ENCODE measurements at regions of chr3 and their contacts with region 1.

Region 1: DNA sequence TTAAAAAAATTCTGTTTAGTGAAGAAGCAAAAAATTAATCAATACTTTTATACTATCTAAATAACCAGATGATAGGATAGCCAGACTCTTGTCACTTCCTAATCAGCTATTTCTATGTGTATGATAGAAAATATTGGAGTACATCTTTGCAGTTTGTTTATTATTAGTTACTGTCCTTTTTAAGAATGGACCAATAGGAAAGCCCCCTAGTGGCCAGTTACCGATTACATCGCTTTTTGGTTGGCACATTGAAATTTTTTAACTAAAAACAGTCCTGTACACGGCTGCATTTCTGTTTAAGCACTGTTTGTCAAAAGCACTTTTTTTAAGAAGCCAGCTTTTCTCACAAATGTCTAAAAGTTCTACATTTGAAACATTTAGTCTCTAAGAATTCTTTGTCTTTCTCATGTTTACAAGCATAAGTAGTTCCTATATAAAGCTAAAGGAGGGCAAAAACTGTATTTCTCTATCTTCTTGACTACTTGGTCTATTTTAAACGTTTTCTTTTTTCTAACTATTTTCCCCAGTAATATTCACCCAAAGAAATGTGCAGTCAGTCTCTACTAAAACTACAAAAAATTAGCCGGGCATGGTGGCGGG is 253.2 kb upstream of the LRTM1 start:
- DNase-seq: peak in 2 of 10 donors; percentile 13 to 17
- H3K4me3 ChIP-seq: no peak overlapping the region
- H3K27ac ChIP-seq: no peak overlapping the region
- H3K27me3 ChIP-seq: peaks cover 0 to 10% (median 0%) of the 10 kb centered on the region in 45 donors
- CTCF ChIP-seq: peak; percentile 57 to 92 (median 79)

Region 2: GRCh38 chr3:54853573-54854404 is 327.2 kb before region 1 on chr3:
- intact Hi-C with region 1: loop called in 1 of 2 experiments (anchors 5 kb)
- DNase-seq: peak; percentile 77 to 90 (median 86)
- H3K4me3 ChIP-seq: peak overlapping the region in 5 of 59 donors; percentile 5 to 29 (median 20)
- H3K27ac ChIP-seq: peak overlapping the region in 22 of 59 donors; percentile 5 to 68 (median 43)
- H3K27me3 ChIP-seq: no peaks in the 10 kb centered on the region
- CTCF ChIP-seq: peak; percentile 60 to 98 (median 93)

Region 3: DNA sequence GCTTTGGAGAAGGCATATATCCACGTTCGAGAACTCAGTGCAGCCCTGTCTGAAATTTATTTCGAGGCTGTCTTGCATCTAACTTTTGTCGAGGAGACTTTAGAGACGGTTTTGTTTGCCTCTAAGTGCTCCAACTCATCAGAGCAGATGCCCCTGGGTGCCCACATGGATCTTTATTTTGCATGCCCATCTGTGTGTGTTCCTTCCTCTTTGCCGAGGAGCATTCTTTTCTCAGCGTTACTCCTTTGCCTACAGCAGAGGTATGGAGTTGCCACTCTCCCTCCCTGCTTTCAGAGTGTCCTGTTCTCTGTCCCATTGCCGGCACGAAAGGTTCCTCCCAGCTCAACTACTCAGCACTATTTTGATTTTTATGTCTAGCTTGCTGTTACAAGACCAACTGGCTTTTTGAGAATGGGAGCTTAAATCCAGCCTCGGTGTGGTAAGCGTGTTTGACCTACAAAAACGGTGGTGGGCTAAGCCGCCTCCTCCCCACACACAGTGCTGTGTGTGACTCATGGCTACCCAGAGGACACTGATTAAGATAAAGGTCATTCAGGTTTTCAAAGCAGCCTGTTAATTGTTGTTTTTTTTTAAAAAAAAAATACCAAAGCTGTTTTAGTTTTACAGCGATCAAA is 317.8 kb before region 1 on chr3:
- intact Hi-C with region 1: loop called in 1 of 2 experiments (anchors 5 kb)
- DNase-seq: peak in 1 of 10 donors; percentile 13
- H3K4me3 ChIP-seq: no peak overlapping the region
- H3K27ac ChIP-seq: no peak overlapping the region
- H3K27me3 ChIP-seq: no peaks in the 10 kb centered on the region
- CTCF ChIP-seq: no peak

Region 4: DNA sequence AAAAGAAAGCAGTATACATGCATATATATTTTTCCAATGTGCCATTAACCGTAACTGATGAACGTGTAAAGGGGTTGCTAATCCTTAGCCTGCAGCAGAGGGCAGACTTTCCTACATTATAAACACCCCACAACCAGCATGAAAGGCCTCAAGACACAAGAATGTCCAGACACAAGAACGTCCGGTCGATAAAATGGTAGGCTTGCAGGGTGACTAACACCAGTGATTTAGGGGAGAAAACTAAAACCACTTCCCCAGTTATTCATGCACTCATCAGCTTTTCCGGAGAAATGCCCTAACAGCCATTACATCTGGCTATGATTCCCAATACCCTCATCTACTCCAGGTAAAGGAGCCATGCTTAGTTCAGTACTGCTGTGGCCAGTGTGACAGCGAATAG is 310.6 kb before region 1 on chr3:
- intact Hi-C with region 1: loop called (anchors 2 to 5 kb)
- DNase-seq: peak in 2 of 10 donors; percentile 44 to 54
- H3K4me3 ChIP-seq: no peak overlapping the region
- H3K27ac ChIP-seq: no peak overlapping the region
- H3K27me3 ChIP-seq: no peaks in the 10 kb centered on the region
- CTCF ChIP-seq: peak in 55 of 56 donors; percentile 24 to 83 (median 62)

Region 5: GRCh38 chr3:54939557-54940300 is 241.3 kb before region 1 on chr3:
- intact Hi-C with region 1: loop called in 1 of 2 experiments (anchors 10 kb)
- DNase-seq: no peak
- H3K4me3 ChIP-seq: no peak overlapping the region
- H3K27ac ChIP-seq: no peak overlapping the region
- H3K27me3 ChIP-seq: no peaks in the 10 kb centered on the region
- CTCF ChIP-seq: no peak

Region 6: DNA sequence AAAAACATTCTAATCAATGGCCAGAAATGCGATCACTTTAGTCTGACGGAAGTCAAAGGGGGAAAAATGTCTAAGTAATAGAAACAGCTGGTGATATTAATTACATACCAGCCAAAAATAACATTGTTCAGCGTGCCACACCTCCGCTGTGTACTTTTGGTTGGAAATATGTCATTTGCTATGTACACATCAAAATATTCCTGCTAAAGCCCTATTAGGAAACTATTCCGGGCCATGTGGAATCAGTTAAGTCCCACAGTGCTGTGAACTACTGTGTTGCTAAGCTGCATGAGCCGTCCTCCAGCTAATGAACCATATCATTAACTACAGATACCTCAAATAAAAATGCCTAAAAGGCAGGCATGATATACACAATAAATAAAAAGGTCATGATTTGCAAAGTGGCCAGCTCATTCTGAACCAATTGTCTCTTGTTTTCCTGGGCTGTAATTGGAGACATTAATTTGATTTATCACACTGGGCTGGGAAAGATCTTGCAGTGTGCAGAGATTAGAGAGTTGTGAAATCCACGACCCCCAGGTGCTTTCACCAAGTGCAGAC is 52.7 kb before region 1 on chr3:
- intact Hi-C with region 1: no loop called
- DNase-seq: no peak
- H3K4me3 ChIP-seq: no peak overlapping the region
- H3K27ac ChIP-seq: no peak overlapping the region
- H3K27me3 ChIP-seq: peaks cover 0 to 46% (median 7%) of the 10 kb centered on the region in 45 donors
- CTCF ChIP-seq: no peak

Measured in dorsolateral prefrontal cortex (tissue), 120 donors.